ENCODE measurements at regions of chr1 and their contacts with region 1.

Region 1: GRCh38 chr1:37978541-37978940 is 11.3 kb downstream of the SF3A3 start:
- DNase-seq: no peak
- CTCF ChIP-seq: no peak

Region 2: GRCh38 chr1:37890378-37891014 is 88.0 kb before region 1 on chr1:
- in situ Hi-C with region 1: loop called (anchors 10 kb)
- DNase-seq: peak; percentile 59
- CTCF ChIP-seq: peak; percentile 65

Region 3: DNA sequence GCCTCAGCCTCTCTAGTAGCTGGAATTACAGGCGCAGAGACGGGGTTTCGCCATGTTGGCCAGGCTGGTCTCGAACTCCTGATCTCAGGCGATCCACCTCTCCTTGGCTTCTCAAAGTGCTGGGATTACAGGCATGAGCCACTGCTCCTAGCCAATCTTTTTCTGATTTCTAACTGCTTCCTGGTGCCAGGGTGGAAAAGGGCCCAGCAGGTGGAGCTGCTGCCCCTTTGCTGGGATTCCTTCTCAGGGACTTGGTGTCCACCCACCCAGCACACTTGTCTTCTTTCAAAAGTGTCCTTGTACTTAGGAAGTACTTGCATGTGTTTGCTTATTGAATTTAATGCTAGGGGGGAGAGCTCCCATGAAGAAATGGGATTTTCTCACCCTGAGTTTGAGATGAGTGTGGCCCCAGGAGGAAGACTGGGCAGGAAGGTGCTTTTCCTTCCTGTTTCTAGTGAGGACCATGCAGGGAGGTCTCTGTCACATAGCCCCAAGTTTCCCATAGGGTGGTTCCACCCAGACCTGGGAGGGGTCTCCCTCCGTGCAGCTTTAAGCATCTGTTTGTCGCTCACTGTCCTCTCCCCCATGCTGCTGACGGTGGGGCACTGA is 48.2 kb after region 1 on chr1:
- in situ Hi-C with region 1: no loop called
- DNase-seq: peak; percentile 58
- CTCF ChIP-seq: peak; percentile 82